CD8-positive, alpha-beta T cell (primary cell): ENCODE measurements at regions of chr9 and their contacts with region 1.

Region 1: GRCh38 chr9:72464857-72465592 is 56.4 kb upstream of the TMC1 start:
- DNase-seq: peak in 1 of 9 experiments; percentile 12
- ATAC-seq: no peak
- H3K4me3 ChIP-seq: no peak overlapping the region
- H3K4me3 Mint-ChIP-seq: peak overlapping the region; percentile 9
- H3K27ac ChIP-seq: no peak overlapping the region
- H3K27ac Mint-ChIP-seq: no peak overlapping the region
- H3K4me1 ChIP-seq: no peaks in the 10 kb centered on the region
- H3K4me1 Mint-ChIP-seq: peaks cover 4% of the 10 kb centered on the region
- H3K27me3 ChIP-seq: no peaks in the 10 kb centered on the region
- H3K27me3 Mint-ChIP-seq: peaks cover 2% of the 10 kb centered on the region
- CTCF ChIP-seq: no peak

Region 2: GRCh38 chr9:72356041-72356582 is 108.9 kb before region 1 on chr9:
- CTCF ChIA-PET with region 1: no interaction called
- POLR2A ChIA-PET with region 1: no interaction called
- intact Hi-C with region 1: no loop called
- DNase-seq: peak in 1 of 9 experiments; percentile 14
- ATAC-seq: no peak
- H3K4me3 ChIP-seq: no peak overlapping the region
- H3K4me3 Mint-ChIP-seq: no peak overlapping the region
- H3K27ac ChIP-seq: no peak overlapping the region
- H3K27ac Mint-ChIP-seq: peak overlapping the region; percentile 82
- H3K4me1 ChIP-seq: peaks cover 33% of the 10 kb centered on the region
- H3K4me1 Mint-ChIP-seq: peaks cover 62% of the 10 kb centered on the region
- H3K27me3 ChIP-seq: no peaks in the 10 kb centered on the region
- H3K27me3 Mint-ChIP-seq: no peaks in the 10 kb centered on the region
- CTCF ChIP-seq: no peak

Region 3: GRCh38 chr9:72478966-72479365 is 13.9 kb after region 1 on chr9:
- CTCF ChIA-PET with region 1: no interaction called
- POLR2A ChIA-PET with region 1: interaction called, 3 read pairs
- intact Hi-C with region 1: loop called in 1 of 2 experiments (anchors 2 kb)
- DNase-seq: no peak
- ATAC-seq: no peak
- H3K4me3 ChIP-seq: no peak overlapping the region
- H3K4me3 Mint-ChIP-seq: peak overlapping the region; percentile 42
- H3K27ac ChIP-seq: no peak overlapping the region
- H3K27ac Mint-ChIP-seq: no peak overlapping the region
- H3K4me1 ChIP-seq: peaks cover 6% of the 10 kb centered on the region
- H3K4me1 Mint-ChIP-seq: peaks cover 26% of the 10 kb centered on the region
- H3K27me3 ChIP-seq: no peaks in the 10 kb centered on the region
- H3K27me3 Mint-ChIP-seq: no peaks in the 10 kb centered on the region
- CTCF ChIP-seq: no peak

Region 4: DNA sequence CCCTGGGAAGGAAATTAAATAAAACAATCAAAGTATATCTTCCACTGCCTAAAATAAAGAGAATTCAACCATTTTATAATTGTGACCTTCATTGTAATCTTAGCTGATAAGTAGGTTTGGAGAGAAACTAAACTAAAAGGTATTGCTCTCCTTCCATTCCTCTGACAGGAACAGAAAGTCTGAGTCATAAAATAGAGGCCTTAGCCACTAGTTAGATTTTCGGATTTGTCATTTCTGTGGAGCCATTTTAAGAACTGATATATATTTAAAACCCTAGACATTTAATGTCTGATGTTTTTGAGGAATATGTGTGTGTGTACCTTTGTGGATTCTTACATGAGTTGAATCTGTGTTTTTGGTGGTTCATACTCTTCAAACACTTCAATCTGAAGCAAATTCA is 44.6 kb after region 1 on chr9:
- CTCF ChIA-PET with region 1: no interaction called
- POLR2A ChIA-PET with region 1: no interaction called
- intact Hi-C with region 1: loop called in 1 of 2 experiments (anchors 5 kb)
- DNase-seq: no peak
- ATAC-seq: no peak
- H3K4me3 ChIP-seq: no peak overlapping the region
- H3K4me3 Mint-ChIP-seq: no peak overlapping the region
- H3K27ac ChIP-seq: no peak overlapping the region
- H3K27ac Mint-ChIP-seq: no peak overlapping the region
- H3K4me1 ChIP-seq: no peaks in the 10 kb centered on the region
- H3K4me1 Mint-ChIP-seq: no peaks in the 10 kb centered on the region
- H3K27me3 ChIP-seq: no peaks in the 10 kb centered on the region
- H3K27me3 Mint-ChIP-seq: no peaks in the 10 kb centered on the region
- CTCF ChIP-seq: no peak